Activated naive CD4-positive, alpha-beta T cell treated with anti-CD3 and anti-CD28 coated beads for 36 hours (primary cell): ENCODE measurements at regions of chr20 and their contacts with region 1.

Region 1: GRCh38 chr20:1588533-1589460 is 31.0 kb downstream of the SIRPB1 start:
- DNase-seq: peak; percentile 58
- H3K4me3 Mint-ChIP-seq: peak overlapping the region; percentile 20
- H3K27ac Mint-ChIP-seq: peak overlapping the region; percentile 88
- H3K4me1 Mint-ChIP-seq: peaks cover 42% of the 10 kb centered on the region
- H3K27me3 Mint-ChIP-seq: no peaks in the 10 kb centered on the region

Region 2: DNA sequence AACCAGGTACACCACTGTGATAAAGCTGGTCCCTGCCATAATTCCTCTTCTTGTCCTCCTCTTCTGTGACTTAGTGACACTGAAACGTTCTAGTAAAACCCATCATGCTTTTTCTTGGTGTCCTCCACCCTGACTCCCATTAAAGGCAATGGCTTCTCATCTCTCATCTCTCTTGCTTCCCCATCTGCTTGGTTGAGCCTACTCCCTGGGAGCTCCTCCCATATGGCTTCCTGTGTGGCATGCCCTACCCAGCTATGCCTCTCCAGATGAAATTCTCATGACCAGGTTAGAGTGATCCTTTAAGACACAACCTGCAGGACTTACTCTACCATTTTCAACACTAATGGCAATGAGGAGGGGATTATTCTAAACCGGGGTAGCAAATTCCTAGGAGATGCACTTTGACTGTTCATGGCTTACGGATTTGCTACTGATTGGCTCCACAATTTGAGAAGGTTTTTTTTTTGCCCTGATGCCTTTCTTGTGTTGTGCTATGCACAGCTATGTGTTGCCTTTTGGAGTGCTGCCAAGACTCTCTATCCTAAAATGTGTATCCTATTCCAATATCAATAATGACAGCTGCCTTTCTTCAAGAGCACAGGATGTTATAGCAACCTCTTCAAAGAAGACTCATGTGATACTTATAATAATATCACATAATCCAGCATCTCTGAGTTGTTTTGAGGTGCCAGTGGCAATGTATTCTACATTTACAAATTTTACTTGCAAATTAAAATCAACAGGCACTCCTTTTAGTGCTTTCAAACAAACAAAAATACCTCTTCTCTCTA is 62.7 kb after region 1 on chr20:
- CTCF ChIA-PET with region 1: no interaction called
- intact Hi-C with region 1: loop called (anchors 2 kb)
- DNase-seq: peak; percentile 36
- H3K4me3 Mint-ChIP-seq: no peak overlapping the region
- H3K27ac Mint-ChIP-seq: peak overlapping the region; percentile 43
- H3K4me1 Mint-ChIP-seq: peaks cover 84% of the 10 kb centered on the region
- H3K27me3 Mint-ChIP-seq: no peaks in the 10 kb centered on the region